ENCODE measurements at regions of chr2 and their contacts with region 1.

Region 1: DNA sequence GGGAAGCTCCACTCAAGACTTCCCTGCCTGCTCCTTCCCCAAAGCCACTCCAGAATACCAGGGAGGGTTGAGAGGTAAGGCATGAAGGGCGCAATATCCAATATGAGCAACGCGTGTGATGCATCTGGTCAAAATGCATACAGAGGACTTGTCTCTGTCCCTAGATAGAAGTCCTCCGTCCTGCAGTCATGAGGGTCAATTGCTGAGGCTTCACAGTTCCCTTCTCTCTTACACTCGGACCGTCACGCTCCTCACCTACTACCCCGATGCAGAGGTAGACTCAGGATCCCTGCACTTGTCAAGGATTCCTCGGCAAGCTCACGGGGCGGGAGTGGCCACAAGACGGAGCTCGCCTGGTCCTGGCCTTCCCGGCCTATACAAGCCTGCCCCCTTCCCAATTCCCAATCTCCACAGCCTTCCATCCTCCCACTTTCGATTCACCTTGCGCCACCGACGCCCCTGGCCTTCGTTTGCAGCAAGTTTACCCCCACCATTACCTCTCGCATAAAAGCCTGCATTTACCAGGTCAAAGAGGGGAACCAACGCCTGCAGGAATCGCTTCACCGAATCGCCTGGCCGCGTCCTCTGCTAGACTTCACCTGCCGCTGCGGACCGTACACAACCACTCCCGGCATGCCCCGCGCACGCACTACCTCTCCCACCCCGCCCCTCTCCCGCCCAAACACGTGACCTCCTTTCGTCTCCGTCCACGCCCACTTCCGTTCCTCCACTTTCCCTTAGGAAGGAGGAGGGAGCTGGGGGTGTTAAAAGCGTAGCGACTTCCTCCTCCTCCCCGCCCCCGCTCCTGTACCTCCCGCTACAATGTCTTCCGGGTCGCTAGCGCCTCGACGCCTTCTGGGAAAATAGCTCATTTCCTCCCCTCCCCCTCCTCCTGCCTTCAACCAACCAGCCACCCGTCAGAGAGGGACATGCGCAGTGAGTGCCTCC is at the start of gene ORC4:
- DNase-seq: peak; percentile 92 to 98 (median 97)
- H3K4me3 ChIP-seq: peak within 1 kb of the TSS; percentile 59 to 99 (median 91)
- H3K27ac ChIP-seq: peak within 1 kb of the TSS; percentile 73 to 98 (median 91)
- H3K27me3 ChIP-seq: no peaks in the 10 kb centered on the region
- CTCF ChIP-seq: peak in 39 of 56 donors; percentile 7 to 48 (median 33)
- total RNA-seq, gene ORC4: 40.1 to 94.4 (median 74.7) TPM

Region 2: GRCh38 chr2:147843864-147844696 is 176.3 kb before region 1 on chr2:
- intact Hi-C with region 1: loop called in 1 of 2 experiments (anchors 10 kb)
- DNase-seq: peak; percentile 74 to 94 (median 88)
- H3K4me3 ChIP-seq: peak overlapping the region; percentile 63 to 96 (median 84)
- H3K27ac ChIP-seq: peak overlapping the region; percentile 79 to 99 (median 97)
- H3K27me3 ChIP-seq: no peaks in the 10 kb centered on the region
- CTCF ChIP-seq: peak in 34 of 56 donors; percentile 8 to 48 (median 30)

Region 3: GRCh38 chr2:148102641-148103040 is 82.3 kb after region 1 on chr2:
- intact Hi-C with region 1: loop called in 1 of 2 experiments (anchors 10 kb)
- DNase-seq: no peak
- H3K4me3 ChIP-seq: no peak overlapping the region
- H3K27ac ChIP-seq: peak overlapping the region in 7 of 59 donors; percentile 7 to 52 (median 15)
- H3K27me3 ChIP-seq: no peaks in the 10 kb centered on the region
- CTCF ChIP-seq: no peak